BJ (cell line): ENCODE measurements at regions of chr16 and their contacts with region 1.

Region 1: GRCh38 chr16:4307215-4308037 is 8.4 kb upstream of the GLIS2 start:
- DNase-seq: peak; percentile 81
- H3K4me3 ChIP-seq: peak overlapping the region; percentile 59
- H3K27me3 ChIP-seq: no peaks in the 10 kb centered on the region
- CTCF ChIP-seq: no peak

Region 2: DNA sequence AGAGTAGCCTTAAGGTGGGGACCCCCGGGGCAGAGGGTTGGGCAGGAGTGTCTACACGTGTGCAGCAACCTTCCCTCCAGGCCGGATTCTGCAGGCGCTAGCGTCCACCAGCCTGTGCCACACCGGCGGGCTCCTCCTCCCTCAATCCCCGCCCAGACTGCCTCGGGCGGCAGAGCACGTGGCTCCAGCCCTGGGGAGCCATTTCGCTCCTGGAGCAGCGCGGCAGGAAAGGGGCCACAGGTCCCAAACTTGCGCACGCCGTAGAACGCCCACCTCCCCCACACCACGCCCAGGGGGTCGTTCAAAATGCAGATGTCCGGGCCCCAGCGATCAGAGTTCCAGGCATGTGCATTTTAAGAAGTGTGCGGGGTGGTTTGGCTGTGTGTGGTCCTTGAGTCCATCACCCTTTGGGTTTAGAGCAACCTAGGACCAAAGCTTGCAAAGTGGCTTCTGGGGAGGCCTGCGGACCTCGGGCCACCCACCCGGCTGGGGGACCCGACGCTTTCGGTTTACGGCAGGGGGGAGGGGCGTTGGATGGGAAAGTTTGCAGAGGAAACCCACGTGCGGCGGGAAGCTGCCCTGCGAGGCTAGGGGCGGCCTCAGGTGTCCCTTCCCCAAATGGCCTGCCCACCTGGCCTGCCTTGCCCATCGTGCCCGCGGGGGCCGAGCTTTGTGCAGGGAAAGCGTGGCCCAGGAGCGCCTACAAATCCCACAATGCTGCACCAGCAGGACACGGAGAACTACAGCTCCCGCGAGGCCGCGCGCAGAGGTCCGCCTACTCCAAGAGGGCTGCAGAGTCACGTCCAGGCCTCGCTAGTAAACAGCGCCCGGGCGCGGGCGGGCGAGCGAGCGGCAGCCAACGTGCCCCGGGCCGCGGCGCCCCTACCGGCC is 36.0 kb before region 1 on chr16:
- CTCF ChIA-PET with region 1: interaction called, 16 read pairs
- POLR2A ChIA-PET with region 1: interaction called, 4 read pairs
- DNase-seq: peak; percentile 47
- H3K4me3 ChIP-seq: peak overlapping the region; percentile 73
- H3K27me3 ChIP-seq: no peaks in the 10 kb centered on the region
- CTCF ChIP-seq: no peak

Region 3: GRCh38 chr16:4293822-4294457 is 13.5 kb before region 1 on chr16:
- CTCF ChIA-PET with region 1: interaction called, 14 read pairs
- POLR2A ChIA-PET with region 1: interaction called, 5 read pairs
- DNase-seq: no peak
- H3K4me3 ChIP-seq: no peak overlapping the region
- H3K27me3 ChIP-seq: no peaks in the 10 kb centered on the region
- CTCF ChIP-seq: no peak

Region 4: DNA sequence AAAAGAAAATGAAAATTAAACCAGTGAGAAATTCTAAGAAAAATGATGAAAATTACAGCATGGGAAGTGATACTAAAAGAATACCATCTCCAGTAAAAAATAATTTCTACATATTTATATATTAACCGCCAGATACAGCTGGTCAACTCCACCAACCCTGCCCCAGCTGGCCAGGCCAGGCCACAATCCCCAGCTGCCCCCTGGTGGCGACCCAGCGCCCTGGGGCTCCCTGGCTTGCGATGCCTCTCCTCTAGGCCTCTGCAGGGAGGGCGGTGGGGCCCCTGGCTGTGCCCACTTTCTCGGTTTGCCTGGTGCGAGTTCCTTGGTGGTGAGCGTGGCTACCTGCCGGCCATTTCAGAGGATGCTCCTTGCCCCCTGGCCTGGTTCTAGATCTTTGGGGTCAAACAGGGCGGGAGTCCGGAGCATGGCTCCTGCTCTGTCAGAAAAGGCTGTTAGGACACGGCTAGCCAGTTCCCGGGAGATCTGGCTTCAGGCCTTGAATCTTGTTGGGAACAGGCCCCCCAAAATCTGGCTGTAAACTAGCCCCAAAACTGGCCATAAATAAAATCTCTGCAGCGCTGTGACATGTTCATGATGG is 22.9 kb after region 1 on chr16:
- CTCF ChIA-PET with region 1: interaction called, 106 read pairs
- POLR2A ChIA-PET with region 1: interaction called, 3 read pairs
- DNase-seq: no peak
- H3K4me3 ChIP-seq: no peak overlapping the region
- H3K27me3 ChIP-seq: no peaks in the 10 kb centered on the region
- CTCF ChIP-seq: peak; percentile 98

Region 5: GRCh38 chr16:4371357-4372000 is 64.1 kb after region 1 on chr16 and contains the start of gene VASN:
- CTCF ChIA-PET with region 1: interaction called, 11 read pairs
- POLR2A ChIA-PET with region 1: no interaction called
- DNase-seq: no peak
- H3K4me3 ChIP-seq: peak within 1 kb of the TSS; percentile 97
- H3K27me3 ChIP-seq: no peaks in the 10 kb centered on the region
- CTCF ChIP-seq: no peak
- polyA plus RNA-seq, gene VASN: 30.0 and 71.6 TPM in 2 replicates

Region 6: GRCh38 chr16:4494746-4495490 is 187.5 kb after region 1 on chr16:
- CTCF ChIA-PET with region 1: no interaction called
- POLR2A ChIA-PET with region 1: no interaction called
- DNase-seq: no peak
- H3K4me3 ChIP-seq: no peak overlapping the region
- H3K27me3 ChIP-seq: no peaks in the 10 kb centered on the region
- CTCF ChIP-seq: no peak